OCI-LY7 (cell line): ENCODE measurements at regions of chr15 and their contacts with region 1.

Region 1: DNA sequence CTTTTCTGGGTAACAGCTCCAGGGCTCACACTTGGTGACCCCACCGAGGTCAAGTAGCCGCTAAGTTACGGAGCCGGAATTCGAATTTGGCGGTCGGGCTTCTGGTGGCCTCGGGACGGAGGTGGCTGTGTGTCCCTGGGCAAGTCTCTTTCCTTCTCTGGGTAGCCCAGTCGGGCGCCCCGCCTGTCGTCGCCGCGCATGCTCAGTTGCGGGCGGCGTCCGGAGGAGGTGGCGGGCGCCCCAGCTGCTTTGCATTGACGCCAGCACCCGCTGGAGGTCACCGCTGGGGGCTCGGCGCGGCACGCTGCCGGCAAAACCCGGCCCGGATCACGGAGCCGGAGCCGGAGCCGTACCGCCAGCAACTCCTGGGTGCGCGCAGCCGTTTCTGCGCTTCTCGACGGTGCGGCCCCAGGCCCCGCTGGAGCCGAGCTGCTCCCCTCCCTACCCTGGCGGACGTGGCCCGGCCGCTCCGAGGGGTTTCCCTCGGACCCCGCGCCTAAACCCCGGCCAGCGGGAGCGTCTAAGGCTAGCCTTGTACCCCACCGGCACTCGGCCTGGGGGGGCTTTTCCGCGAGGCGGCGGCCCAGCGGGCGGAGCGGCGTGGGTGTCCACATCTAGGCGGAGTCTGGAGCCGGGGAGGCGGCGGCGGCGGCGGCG is 474 bp upstream of the PDE8A start:
- DNase-seq: peak; percentile 98
- H3K4me3 ChIP-seq: peak overlapping the region; percentile 73
- H3K27ac ChIP-seq: peak overlapping the region; percentile 68
- H3K4me1 ChIP-seq: peaks cover 44% of the 10 kb centered on the region
- CTCF ChIP-seq: no peak

Region 2: GRCh38 chr15:84600851-84601838 is 380.0 kb before region 1 on chr15 and contains the start of gene ZSCAN2:
- CTCF ChIA-PET with region 1: interaction called, 3 read pairs
- POLR2A ChIA-PET with region 1: no interaction called
- intact Hi-C with region 1: loop called (anchors 2 kb)
- DNase-seq: peak; percentile 93
- H3K4me3 ChIP-seq: peak within 1 kb of the TSS; percentile 83
- H3K27ac ChIP-seq: no peak within 1 kb of the TSS
- H3K4me1 ChIP-seq: peaks cover 47% of the 10 kb centered on the region
- CTCF ChIP-seq: no peak
- total RNA-seq, gene ZSCAN2: 12.4 and 21.7 TPM in 2 replicates

Region 3: DNA sequence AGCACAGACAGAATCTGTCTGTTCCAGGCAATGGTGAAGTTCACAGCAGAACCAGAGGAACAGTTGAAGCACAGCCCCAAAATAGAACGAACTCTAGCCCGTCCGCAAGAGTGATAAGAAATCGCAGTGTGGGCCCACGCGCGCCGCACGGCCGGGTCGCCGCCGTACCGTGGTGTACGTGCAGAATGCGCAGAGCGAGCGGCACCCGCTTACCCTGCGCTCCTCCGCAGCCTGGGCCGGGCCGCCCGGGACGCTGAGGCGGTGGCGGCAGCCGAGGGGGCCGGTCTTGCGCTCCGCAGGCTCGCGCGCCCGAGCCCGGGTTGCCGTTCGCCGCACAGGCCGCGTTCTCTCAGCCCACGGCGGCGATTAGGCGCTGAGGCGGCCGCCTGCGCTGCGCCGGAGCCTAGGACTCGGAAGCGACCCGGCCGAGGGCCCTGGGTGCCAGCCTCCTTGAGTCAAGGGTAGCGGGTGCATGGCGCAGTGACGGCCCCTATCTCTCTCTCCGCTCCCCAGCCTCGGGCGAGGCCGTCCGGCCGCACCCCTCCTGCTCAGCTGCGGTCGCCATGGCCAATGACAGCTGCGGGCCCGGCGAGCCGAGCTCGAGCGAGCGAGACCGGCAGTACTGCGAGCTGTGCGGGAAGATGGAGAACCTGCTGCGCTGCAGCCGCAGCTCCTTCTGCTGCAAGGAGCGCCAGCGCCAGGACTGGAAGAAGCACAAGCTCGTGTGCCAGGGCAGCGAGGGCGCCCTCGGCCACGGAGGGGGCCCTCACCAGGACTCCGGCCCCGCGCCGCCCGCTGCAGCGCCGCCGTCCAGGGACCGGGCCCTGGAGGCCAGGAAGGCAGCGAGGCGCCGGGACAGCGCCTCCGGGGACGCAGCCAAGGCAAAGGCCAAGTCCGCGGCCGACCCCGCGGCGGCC is 347.6 kb before region 1 on chr15:
- CTCF ChIA-PET with region 1: no interaction called
- POLR2A ChIA-PET with region 1: no interaction called
- intact Hi-C with region 1: loop called (anchors 2 kb)
- DNase-seq: peak; percentile 79
- H3K4me3 ChIP-seq: peak overlapping the region; percentile 76
- H3K27ac ChIP-seq: peak overlapping the region; percentile 18
- H3K4me1 ChIP-seq: peaks cover 40% of the 10 kb centered on the region
- CTCF ChIP-seq: 0 out of 2 replicates have a peak, but pooled peaks have one; percentile 16

Region 4: DNA sequence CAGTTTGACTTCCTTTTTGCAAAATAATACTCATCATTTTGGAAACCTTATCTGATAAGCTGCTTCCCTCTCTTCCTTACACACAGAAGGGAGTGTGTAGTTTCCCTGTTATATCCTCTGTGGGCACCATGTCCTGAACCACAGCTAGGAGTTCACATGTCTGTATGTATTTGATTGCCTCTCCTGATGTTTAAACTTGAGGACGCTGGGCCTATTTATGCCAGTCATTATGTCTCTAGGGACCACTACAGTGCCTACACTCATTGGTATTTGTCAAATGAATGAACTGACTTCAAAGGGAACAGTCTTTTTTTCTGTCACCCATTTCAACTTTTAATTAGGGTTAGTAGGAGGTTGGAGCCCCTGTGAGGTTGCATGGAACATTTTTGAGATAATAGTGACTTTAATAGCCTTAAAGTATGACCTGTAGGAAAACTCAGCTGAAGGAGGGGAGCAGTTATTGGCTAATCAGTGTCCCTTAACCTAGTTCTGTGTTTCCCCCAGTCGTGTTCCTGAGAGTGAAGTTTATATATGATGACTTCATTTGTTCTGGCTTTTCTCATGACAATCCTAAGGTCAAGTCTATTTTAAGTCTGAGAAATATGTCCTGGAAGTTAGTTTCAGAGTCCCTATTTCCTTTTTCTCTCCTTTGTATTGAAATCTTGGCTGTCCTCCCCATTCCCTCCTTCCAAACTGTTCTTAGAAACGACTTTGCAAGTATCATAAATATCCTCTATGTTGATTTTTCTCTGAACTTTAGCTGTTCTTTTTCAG is 29.4 kb after region 1 on chr15:
- CTCF ChIA-PET with region 1: interaction called, 3 read pairs
- POLR2A ChIA-PET with region 1: interaction called, 4 read pairs
- intact Hi-C with region 1: loop called (anchors 2 kb)
- DNase-seq: peak; percentile 62
- H3K4me3 ChIP-seq: no peak overlapping the region
- H3K27ac ChIP-seq: peak overlapping the region; percentile 47
- H3K4me1 ChIP-seq: peaks cover 52% of the 10 kb centered on the region
- CTCF ChIP-seq: peak; percentile 72

Region 5: DNA sequence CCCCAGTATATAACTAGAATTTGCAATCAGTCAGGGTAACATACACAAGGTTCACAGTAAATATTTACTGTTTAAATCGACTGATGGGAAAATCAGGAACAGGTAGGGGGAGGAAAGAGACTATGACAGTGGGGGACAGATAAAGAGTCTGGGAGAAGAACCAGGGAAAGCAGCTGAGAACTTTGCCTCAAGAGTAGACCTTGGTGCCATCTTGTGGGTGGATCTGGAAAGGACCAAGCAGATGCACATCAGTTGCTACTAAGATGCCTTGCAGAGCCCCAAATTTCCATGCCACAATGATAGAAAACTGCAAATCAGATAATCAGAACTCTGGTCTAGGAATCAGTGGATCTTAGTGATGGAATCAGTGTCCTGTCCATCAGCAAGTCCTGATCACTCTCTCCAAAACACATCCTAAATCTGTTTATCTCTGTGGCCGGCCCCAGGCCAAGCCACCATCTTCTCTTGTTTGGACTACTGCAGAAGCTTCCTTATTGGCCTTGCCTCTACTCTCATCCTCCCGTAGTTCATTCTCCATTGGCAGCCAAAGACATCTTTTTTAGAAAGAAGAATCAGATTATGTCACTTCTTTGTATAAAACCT is 63.2 kb after region 1 on chr15:
- CTCF ChIA-PET with region 1: no interaction called
- POLR2A ChIA-PET with region 1: no interaction called
- intact Hi-C with region 1: loop called (anchors 1 kb)
- DNase-seq: peak; percentile 48
- H3K4me3 ChIP-seq: no peak overlapping the region
- H3K27ac ChIP-seq: no peak overlapping the region
- H3K4me1 ChIP-seq: no peaks in the 10 kb centered on the region
- CTCF ChIP-seq: peak; percentile 76